Activated naive CD4-positive, alpha-beta T cell treated with anti-CD3 and anti-CD28 coated beads for 36 hours (primary cell): ENCODE measurements at regions of chrX and their contacts with region 1.

Region 1: GRCh38 chrX:39814391-39814790 is 283.4 kb downstream of the BCOR start:
- DNase-seq: peak; percentile 58
- H3K4me3 Mint-ChIP-seq: no peak overlapping the region
- H3K27ac Mint-ChIP-seq: no peak overlapping the region
- H3K4me1 Mint-ChIP-seq: peaks cover 30% of the 10 kb centered on the region
- H3K27me3 Mint-ChIP-seq: no peaks in the 10 kb centered on the region

Region 2: GRCh38 chrX:39682764-39683163 is 131.6 kb before region 1 on chrX:
- CTCF ChIA-PET with region 1: no interaction called
- intact Hi-C with region 1: no loop called
- DNase-seq: no peak
- H3K4me3 Mint-ChIP-seq: no peak overlapping the region
- H3K27ac Mint-ChIP-seq: no peak overlapping the region
- H3K4me1 Mint-ChIP-seq: no peaks in the 10 kb centered on the region
- H3K27me3 Mint-ChIP-seq: no peaks in the 10 kb centered on the region

Region 3: GRCh38 chrX:39874202-39874816 is 59.9 kb after region 1 on chrX:
- CTCF ChIA-PET with region 1: no interaction called
- intact Hi-C with region 1: loop called (anchors 1 kb)
- DNase-seq: peak; percentile 89
- H3K4me3 Mint-ChIP-seq: no peak overlapping the region
- H3K27ac Mint-ChIP-seq: peak overlapping the region; percentile 89
- H3K4me1 Mint-ChIP-seq: peaks cover 49% of the 10 kb centered on the region
- H3K27me3 Mint-ChIP-seq: no peaks in the 10 kb centered on the region

Region 4: DNA sequence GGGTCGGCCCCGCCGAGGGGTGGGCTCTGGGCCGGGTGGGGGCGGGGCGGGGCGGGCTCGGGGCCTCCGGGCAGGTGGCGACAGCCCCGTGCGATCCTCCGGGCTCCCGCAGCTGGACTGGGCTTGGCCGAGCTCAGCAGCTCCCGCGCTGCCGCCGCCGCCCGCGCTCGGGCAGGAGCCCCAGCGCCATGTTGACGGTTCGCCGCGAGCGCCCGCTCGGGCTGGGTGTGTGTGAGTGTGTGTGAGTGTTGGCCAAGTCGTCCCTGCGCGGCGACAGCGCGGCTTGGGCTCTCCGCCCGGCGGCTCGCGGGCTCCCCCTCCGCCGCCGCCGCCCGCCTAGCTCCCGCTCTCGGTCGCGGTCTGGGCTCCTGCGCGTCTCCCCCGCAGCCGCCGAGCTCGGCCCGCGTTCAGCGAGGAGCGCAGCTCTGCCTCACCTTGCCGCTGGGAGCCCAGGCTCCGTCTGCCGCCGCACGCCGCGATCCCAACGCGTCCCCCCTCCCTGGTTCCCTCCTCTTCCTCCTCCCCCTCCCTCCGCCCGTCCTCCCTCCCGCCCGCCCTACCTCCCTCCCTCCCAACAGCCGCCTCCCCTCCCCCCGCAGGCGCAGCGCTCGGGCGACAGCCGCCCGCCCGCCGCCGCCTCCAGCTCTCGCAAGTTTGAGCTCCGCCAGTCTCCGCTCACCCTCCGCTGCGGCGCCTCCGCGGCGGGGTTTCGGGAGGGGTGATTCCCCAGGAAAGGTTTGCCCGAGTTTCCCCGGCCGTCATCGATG is 283.3 kb after region 1 on chrX and contains the start of gene BCOR:
- CTCF ChIA-PET with region 1: no interaction called
- intact Hi-C with region 1: loop called (anchors 2 kb)
- DNase-seq: peak; percentile 75
- H3K4me3 Mint-ChIP-seq: peak within 1 kb of the TSS; percentile 86
- H3K27ac Mint-ChIP-seq: peak within 1 kb of the TSS; percentile 82
- H3K4me1 Mint-ChIP-seq: peaks cover 24% of the 10 kb centered on the region
- H3K27me3 Mint-ChIP-seq: no peaks in the 10 kb centered on the region
- total RNA-seq, gene BCOR: 29.1 to 29.9 TPM

Region 5: GRCh38 chrX:40175511-40176350 is 361.3 kb after region 1 on chrX:
- CTCF ChIA-PET with region 1: no interaction called
- intact Hi-C with region 1: loop called (anchors 1 kb)
- DNase-seq: peak; percentile 72
- H3K4me3 Mint-ChIP-seq: peak overlapping the region; percentile 91
- H3K27ac Mint-ChIP-seq: peak overlapping the region; percentile 99
- H3K4me1 Mint-ChIP-seq: peaks cover 23% of the 10 kb centered on the region
- H3K27me3 Mint-ChIP-seq: no peaks in the 10 kb centered on the region

Region 6: DNA sequence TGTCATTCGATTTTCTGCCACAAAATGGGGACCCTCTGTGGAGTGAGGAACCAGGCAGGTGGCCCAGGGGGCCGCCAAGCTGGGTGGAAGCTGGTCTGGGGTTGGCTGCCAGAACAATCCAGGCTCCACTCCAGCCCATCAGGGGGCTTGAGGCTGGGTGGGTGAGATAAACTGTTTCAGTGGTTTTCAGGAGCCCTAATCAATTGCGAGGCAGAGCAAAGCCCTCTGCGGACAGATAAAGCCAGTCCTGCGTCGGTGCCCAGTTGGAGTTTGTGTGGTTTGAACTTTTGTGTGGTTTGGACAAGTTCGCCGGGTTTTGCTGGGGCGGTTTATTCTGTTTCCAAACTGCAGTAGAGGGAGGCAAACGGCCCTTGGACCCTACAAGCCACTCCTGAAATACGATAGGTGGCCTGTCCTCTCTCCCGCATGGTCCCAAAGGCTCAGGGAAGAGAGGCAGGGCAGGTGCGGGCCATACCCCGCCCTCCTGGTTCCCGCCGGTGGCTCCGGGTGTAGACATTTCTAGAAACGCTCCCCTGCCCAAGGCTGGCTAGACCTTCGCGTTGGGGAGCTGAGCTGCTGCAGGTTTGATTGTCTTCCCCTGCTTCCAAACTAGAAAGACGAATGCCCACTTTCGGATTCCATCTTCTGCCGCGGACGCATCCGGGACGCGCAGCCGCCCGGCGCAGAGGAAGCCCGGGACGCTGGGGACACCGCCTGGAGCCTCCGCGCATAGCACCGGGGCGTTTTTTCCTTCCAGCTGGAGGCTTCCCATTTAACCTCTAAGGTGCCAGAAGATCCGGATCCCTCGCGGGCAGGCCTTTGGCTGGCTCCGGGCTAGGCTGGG is 452.3 kb after region 1 on chrX:
- CTCF ChIA-PET with region 1: interaction called, 13 read pairs
- intact Hi-C with region 1: loop called (anchors 2 kb)
- DNase-seq: peak; percentile 69
- H3K4me3 Mint-ChIP-seq: peak overlapping the region; percentile 70
- H3K27ac Mint-ChIP-seq: no peak overlapping the region
- H3K4me1 Mint-ChIP-seq: peaks cover 8% of the 10 kb centered on the region
- H3K27me3 Mint-ChIP-seq: no peaks in the 10 kb centered on the region